Activated naive CD4-positive, alpha-beta T cell treated with anti-CD3 and anti-CD28 coated beads, Interleukin-2, amount 10 ng/mL, durations not matched to agents 7 days and 5 days (primary cell): ENCODE measurements at regions of chr4 and their contacts with region 1.

Region 1: GRCh38 chr4:102546635-102547034 is 45.5 kb downstream of the NFKB1 start:
- DNase-seq: no peak
- H3K4me3 Mint-ChIP-seq: no peak overlapping the region
- H3K27ac Mint-ChIP-seq: no peak overlapping the region
- H3K4me1 Mint-ChIP-seq: peaks cover 33% of the 10 kb centered on the region
- H3K27me3 Mint-ChIP-seq: no peaks in the 10 kb centered on the region

Region 2: GRCh38 chr4:102535398-102536082 is 11.1 kb before region 1 on chr4:
- CTCF ChIA-PET with region 1: interaction called, 11 read pairs
- DNase-seq: no peak
- H3K4me3 Mint-ChIP-seq: no peak overlapping the region
- H3K27ac Mint-ChIP-seq: peak overlapping the region; percentile 39
- H3K4me1 Mint-ChIP-seq: peaks cover 59% of the 10 kb centered on the region
- H3K27me3 Mint-ChIP-seq: no peaks in the 10 kb centered on the region